ENCODE measurements at regions of chr17 and their contacts with region 1.

Region 1: GRCh38 chr17:47941236-47941994 is at the start of gene PNPO:
- DNase-seq: peak; percentile 98
- ATAC-seq: peak; percentile 99
- H3K4me3 Mint-ChIP-seq: peak within 1 kb of the TSS; percentile 95
- H3K27ac Mint-ChIP-seq: peak within 1 kb of the TSS; percentile 91
- H3K4me1 Mint-ChIP-seq: peaks cover 64% of the 10 kb centered on the region
- H3K27me3 Mint-ChIP-seq: no peaks in the 10 kb centered on the region
- total RNA-seq, gene PNPO: 29.7 to 41.0 TPM

Region 2: DNA sequence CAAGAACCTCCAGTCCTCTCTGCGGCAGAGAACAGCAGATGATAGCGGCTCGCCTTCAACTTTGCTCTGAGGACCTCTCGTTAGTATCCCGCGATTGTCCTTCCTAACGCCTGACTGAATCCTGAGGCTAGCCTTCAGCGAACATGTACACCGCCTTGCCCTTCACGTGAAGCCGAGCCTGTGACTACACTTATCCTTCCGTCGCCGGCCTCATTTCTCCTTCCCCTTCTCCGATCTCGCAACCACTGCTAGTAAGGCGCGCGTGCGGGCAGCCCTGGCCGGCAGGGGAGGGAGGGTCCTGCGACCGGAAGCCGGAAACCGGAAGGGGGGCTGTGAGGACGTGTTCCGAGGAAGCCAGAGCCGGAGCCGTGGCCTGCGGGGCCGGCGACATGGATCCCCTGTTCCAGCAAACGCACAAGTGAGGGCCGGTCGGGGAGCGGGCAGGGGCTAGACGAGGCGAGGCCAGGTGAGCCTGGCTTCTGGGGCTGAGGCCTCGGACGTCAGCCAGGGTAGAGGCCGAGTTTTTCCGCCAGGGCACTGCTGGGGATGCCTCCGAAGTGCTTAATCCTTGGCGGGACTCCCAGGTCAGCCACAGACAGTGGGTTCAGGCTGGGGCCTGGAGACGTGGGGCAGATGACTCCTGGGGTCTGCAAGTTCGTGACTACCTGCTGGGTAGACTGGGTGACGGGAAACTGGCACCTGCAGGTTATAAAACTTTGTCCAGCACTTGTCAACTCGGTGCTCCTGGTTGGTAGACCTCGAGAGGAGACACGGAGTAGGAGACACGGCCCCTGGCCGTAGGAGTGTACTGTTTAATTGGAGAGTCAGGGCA is 1018.4 kb before region 1 on chr17 and contains the start of gene GOSR2:
- CTCF ChIA-PET with region 1: no interaction called
- POLR2A ChIA-PET with region 1: no interaction called
- intact Hi-C with region 1: loop called in 1 of 2 experiments (anchors 10 kb)
- DNase-seq: peak; percentile 94
- ATAC-seq: peak; percentile 96
- H3K4me3 Mint-ChIP-seq: peak within 1 kb of the TSS; percentile 81
- H3K27ac Mint-ChIP-seq: peak within 1 kb of the TSS; percentile 100
- H3K4me1 Mint-ChIP-seq: peaks cover 44% of the 10 kb centered on the region
- H3K27me3 Mint-ChIP-seq: no peaks in the 10 kb centered on the region
- total RNA-seq, gene GOSR2: 38.9 to 42.7 TPM

Region 3: GRCh38 chr17:47840740-47841603 is 100.4 kb before region 1 on chr17 and contains the start of gene SCRN2:
- CTCF ChIA-PET with region 1: interaction called, 14 read pairs
- POLR2A ChIA-PET with region 1: interaction called, 3 read pairs
- intact Hi-C with region 1: loop called in 1 of 2 experiments (anchors 5 kb)
- DNase-seq: peak; percentile 94
- ATAC-seq: peak; percentile 92
- H3K4me3 Mint-ChIP-seq: peak within 1 kb of the TSS; percentile 99
- H3K27ac Mint-ChIP-seq: peak within 1 kb of the TSS; percentile 89
- H3K4me1 Mint-ChIP-seq: peaks cover 22% of the 10 kb centered on the region
- H3K27me3 Mint-ChIP-seq: peaks cover 15% of the 10 kb centered on the region
- total RNA-seq, gene SCRN2: 21.5 to 25.2 TPM

Region 4: DNA sequence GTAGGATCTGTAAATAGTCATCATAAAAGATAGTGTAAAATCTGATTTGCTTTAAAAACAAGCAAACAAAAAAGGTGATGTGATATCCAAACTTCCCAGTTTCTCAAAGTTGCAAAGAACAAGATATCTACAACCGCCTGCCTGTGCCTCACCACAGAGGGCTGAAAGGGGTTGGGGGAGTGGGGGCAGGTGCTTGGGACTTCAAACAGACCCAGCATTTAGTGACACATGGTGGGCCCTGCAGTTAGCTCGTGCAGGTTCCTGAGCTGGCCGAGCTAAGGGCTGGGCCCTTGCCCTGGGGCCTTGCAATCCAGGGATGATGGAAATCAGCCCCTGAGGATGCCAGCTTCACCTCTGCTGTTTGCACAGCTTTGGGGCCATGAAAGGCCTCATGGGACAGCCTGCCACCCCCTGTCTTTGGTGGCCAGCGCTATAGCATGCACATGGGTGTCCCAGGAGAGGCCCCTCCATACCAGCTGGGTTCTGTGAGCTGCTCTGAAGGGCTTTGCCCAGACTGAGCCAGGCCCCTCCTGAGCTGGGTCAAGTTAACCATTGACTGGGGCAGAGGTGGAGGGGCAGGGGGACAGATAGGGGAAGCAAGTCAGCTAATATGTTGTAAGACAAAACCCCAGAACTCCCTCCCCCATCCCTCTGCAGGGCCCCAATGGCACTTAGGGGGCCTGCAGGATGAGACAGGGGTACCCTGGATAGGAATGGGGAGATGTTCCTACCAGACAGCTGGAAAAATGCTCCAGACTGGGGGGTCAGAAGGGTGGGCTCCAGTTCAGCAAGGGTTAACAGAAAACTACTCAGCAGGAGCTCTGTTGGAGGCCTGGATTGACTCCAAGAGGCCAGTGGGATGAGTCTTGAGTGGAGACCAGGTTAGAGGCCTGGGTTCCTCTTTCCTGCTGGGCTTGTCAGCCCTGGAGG is 15.5 kb after region 1 on chr17:
- CTCF ChIA-PET with region 1: interaction called, 16 read pairs
- POLR2A ChIA-PET with region 1: interaction called, 5 read pairs
- intact Hi-C with region 1: no loop called
- DNase-seq: no peak
- ATAC-seq: no peak
- H3K4me3 Mint-ChIP-seq: no peak overlapping the region
- H3K27ac Mint-ChIP-seq: no peak overlapping the region
- H3K4me1 Mint-ChIP-seq: no peaks in the 10 kb centered on the region
- H3K27me3 Mint-ChIP-seq: no peaks in the 10 kb centered on the region

Region 5: DNA sequence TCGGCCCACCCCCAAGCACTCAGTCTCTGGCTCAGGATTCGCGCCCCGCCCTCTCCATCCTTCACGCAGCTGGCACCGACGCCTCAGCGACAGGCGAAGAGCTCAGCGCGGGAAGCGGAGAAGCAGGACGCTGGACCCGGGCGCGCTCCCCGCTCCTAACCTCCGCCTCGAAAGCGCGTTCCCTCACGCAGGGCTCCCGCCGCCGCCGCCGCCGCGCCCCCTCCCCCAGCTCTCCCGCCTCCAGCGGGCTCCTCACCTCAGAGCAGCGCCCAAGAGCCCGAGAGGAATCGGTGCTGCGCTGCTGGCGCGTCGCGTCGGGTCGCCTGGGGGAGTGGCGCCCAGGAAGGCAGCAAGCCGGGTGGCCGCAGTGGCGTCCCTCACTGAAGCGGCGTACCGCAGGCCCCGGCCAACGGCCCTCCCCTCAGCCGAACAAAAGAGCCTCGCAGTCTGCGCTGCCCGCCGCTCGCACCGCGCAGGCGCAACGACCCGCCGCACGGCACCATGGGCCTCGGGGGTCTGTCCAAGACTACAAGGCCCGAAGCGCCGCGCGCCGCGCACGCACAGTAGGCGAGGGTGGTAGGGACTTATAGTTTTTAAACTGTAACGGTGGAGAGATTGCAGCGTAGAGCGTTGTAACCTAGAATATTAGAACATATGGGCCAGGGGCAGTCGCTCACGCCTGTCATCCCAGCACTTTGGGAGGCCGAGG is 159.8 kb after region 1 on chr17 and contains the start of gene CBX1:
- CTCF ChIA-PET with region 1: no interaction called
- POLR2A ChIA-PET with region 1: no interaction called
- intact Hi-C with region 1: loop called in 1 of 2 experiments (anchors 1 kb)
- DNase-seq: peak; percentile 97
- ATAC-seq: peak; percentile 95
- H3K4me3 Mint-ChIP-seq: peak within 1 kb of the TSS; percentile 99
- H3K27ac Mint-ChIP-seq: peak within 1 kb of the TSS; percentile 83
- H3K4me1 Mint-ChIP-seq: peaks cover 41% of the 10 kb centered on the region
- H3K27me3 Mint-ChIP-seq: no peaks in the 10 kb centered on the region
- total RNA-seq, gene CBX1: 58.6 to 66.0 TPM